ENCODE measurements at regions of chr2 and their contacts with region 1.

Region 1: DNA sequence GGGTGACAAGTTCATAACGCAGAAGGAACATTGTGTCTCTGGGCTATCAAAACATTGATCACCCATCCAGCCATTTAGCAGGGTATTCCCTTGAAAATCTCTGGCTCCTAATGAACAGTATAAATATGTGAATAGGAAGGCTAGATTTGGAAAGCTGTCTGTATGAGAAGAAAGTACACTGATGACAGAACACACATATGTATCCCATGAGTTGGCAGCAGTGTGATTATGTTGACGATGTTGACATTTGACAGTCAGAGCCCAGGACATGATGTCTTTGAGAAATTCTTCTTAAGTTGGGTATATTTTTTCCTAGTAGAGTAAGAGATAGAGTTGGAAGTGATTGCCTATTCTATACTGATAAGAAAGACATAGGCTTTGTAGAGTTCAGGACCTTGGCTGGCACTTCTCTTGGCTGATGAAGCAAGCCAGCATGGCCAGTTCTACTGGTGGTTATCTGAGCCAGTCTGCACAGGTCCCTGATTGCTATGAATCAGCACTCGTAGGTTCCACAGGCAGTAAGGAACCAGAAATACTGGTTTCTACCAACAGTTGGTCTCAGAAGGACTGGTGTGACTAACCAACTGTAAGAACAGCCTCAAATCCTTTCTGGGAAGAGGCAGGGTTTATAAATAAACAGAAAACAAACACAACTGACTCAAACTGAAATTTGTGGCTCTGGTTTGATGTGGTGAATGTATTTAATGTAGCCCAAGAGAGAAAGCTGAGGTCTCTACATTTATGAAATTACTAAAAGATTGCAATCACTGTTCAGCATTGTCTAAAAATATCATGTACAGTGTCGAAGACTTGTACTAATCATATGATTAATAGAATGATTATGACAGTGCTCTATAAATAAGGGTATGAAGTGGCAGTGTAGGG is 43.9 kb upstream of the RAPH1 start:
- DNase-seq: peak; percentile 87
- H3K4me3 Mint-ChIP-seq: peak overlapping the region; percentile 37
- H3K27ac Mint-ChIP-seq: peak overlapping the region; percentile 59
- H3K4me1 Mint-ChIP-seq: peaks cover 28% of the 10 kb centered on the region
- H3K27me3 Mint-ChIP-seq: peaks cover 37% of the 10 kb centered on the region

Region 2: GRCh38 chr2:203562268-203562667 is 16.7 kb before region 1 on chr2:
- intact Hi-C with region 1: no loop called
- DNase-seq: no peak
- H3K4me3 Mint-ChIP-seq: no peak overlapping the region
- H3K27ac Mint-ChIP-seq: no peak overlapping the region
- H3K4me1 Mint-ChIP-seq: peaks cover 2% of the 10 kb centered on the region
- H3K27me3 Mint-ChIP-seq: peaks cover 22% of the 10 kb centered on the region

Region 3: GRCh38 chr2:203599509-203599908 is 20.5 kb after region 1 on chr2:
- intact Hi-C with region 1: loop called (anchors 1 kb)
- DNase-seq: peak; percentile 66
- H3K4me3 Mint-ChIP-seq: no peak overlapping the region
- H3K27ac Mint-ChIP-seq: peak overlapping the region; percentile 21
- H3K4me1 Mint-ChIP-seq: peaks cover 30% of the 10 kb centered on the region
- H3K27me3 Mint-ChIP-seq: peaks cover 54% of the 10 kb centered on the region

Region 4: DNA sequence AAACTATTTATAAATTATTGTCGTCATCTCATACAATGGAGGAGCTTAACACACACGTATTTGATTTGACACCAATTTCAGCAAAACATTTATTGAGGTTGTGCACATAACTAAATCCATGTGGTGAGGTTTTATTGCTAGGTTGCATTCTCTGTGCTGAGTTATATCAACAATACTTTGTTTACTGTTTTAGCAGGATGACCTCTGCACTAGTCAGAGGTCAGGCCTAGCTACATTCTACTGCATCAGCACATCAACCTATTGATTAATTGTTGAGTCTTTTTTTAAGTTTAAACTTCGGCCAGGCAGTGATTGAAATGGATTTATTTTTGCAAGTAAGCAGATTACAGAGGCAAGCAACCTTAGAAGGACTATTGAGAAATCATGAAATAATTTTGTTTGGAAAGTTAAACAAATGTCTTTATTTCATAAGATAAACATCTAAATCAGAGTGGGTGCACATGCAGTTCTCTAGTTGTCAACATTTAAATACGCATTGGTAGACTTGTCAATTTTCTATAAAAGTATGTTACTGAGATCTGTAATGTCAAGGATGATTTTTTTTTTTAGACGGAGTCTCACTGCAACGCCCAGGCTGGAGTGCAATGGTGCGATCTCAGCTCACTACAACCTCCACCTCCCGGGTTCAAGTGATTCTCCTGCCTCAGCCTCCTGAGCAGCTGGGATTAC is 52.2 kb after region 1 on chr2:
- intact Hi-C with region 1: no loop called
- DNase-seq: no peak
- H3K4me3 Mint-ChIP-seq: no peak overlapping the region
- H3K27ac Mint-ChIP-seq: no peak overlapping the region
- H3K4me1 Mint-ChIP-seq: no peaks in the 10 kb centered on the region
- H3K27me3 Mint-ChIP-seq: peaks cover 5% of the 10 kb centered on the region

Region 5: GRCh38 chr2:203650860-203651613 is 72.0 kb after region 1 on chr2:
- intact Hi-C with region 1: loop called (anchors 5 kb)
- DNase-seq: peak; percentile 65
- H3K4me3 Mint-ChIP-seq: no peak overlapping the region
- H3K27ac Mint-ChIP-seq: no peak overlapping the region
- H3K4me1 Mint-ChIP-seq: peaks cover 24% of the 10 kb centered on the region
- H3K27me3 Mint-ChIP-seq: no peaks in the 10 kb centered on the region

Region 6: DNA sequence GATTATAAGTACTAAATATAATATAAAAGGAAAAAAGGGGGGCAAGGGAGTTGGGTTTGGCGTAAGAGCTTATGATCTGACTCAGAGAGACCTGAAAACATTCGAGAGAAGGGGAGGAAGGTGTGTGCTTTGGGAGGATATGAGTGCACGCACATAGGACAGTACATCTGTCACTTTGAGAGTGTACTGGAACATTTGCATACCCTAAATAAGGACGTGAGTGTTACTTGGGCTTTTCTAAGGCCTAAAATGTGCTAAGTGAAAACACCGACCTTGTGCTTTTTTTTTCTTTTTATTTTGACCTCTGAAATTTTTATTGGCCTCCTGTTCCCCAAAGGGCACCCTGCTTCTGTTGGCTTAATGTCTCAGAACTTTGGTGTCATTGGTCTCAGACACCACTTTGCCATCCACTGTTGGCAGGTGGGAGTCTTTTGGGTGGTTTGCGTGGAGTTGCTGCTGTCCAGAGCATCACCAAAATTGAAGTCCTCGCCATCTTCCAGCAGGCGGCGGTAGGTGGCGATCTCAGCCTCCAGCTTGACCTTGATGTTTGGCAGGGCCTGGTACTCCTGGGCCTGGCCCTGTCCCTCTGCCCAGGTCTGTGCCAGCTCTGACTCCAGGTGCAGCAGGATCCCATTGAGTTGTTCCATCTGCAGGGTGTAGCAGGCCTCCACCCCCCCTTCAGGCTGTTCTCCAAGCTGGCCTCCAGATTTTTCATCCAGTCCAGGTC is 185.1 kb after region 1 on chr2:
- intact Hi-C with region 1: loop called (anchors 1 kb)
- DNase-seq: peak; percentile 55
- H3K4me3 Mint-ChIP-seq: peak overlapping the region; percentile 19
- H3K27ac Mint-ChIP-seq: peak overlapping the region; percentile 89
- H3K4me1 Mint-ChIP-seq: peaks cover 62% of the 10 kb centered on the region
- H3K27me3 Mint-ChIP-seq: no peaks in the 10 kb centered on the region

Region 7: GRCh38 chr2:203830304-203831055 is 251.5 kb after region 1 on chr2:
- intact Hi-C with region 1: no loop called
- DNase-seq: peak; percentile 81
- H3K4me3 Mint-ChIP-seq: peak overlapping the region; percentile 53
- H3K27ac Mint-ChIP-seq: peak overlapping the region; percentile 93
- H3K4me1 Mint-ChIP-seq: peaks cover 21% of the 10 kb centered on the region
- H3K27me3 Mint-ChIP-seq: no peaks in the 10 kb centered on the region

Region 8: DNA sequence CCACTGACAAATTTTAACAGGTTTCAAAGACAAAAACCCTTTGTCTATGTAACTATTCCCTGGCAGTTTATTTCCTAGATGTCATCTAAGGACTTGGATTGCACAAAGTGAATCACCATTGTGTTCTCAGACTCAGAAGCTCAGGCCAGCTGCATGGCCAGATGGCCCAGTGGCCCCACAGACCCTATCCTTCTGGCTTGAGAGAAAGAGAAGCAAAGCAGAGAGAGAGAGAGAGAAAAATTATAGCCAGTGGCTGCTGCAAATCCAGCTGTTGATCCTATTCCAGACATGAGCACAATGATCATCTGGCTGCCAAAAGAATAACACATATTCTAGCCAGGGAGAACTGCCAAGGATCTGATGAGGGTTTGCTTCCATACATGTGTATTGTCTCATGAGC is 314.4 kb after region 1 on chr2:
- intact Hi-C with region 1: loop called (anchors 10 kb)
- DNase-seq: no peak
- H3K4me3 Mint-ChIP-seq: peak overlapping the region; percentile 21
- H3K27ac Mint-ChIP-seq: peak overlapping the region; percentile 62
- H3K4me1 Mint-ChIP-seq: peaks cover 65% of the 10 kb centered on the region
- H3K27me3 Mint-ChIP-seq: no peaks in the 10 kb centered on the region